Activated T-helper 2 cell treated with anti-CD3 and anti-CD28 coated beads, Interferon-gamma antibody, Interleukin-2, Interleukin-4, amounts not matched to agents 10 μg/mL and 5 μg/mL and 100 μg/mL, durations not matched to agents 14 hours and 24 hours and 36 hours (primary cell): ENCODE measurements at regions of chr11 and their contacts with region 1.

Region 1: DNA sequence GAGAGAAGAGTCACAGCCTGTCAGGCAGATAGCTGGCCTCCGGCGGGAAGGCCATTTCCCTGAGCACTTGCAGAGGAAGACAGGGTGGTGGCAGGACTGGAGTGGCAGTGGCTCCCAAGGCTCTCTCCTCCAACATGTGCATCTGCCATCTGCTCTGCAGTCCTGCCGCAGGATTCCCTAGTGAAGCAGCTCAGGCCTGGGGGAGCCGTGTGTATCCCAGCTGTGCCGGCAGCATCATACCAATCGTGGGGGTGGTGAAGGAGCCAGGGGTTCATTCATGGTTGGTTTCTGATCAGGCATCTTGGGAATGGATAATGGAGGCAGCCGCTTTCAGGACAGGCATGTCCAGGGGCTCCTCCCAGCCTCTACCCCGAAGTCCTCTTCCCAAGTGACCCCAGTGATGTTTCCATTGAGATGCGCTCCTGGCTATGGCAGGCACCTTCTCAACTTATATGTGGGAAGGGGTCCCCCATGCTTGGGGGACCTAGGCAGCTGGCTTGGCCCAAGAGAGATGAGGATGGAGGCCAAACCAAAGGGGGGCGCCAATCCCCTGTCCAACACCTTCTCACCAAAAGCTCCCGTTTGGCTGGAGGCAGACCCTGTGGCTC is 6.1 kb downstream of the TAGLN start:
- DNase-seq: no peak
- H3K4me3 Mint-ChIP-seq: no peak overlapping the region
- H3K27ac Mint-ChIP-seq: no peak overlapping the region
- H3K4me1 Mint-ChIP-seq: no peaks in the 10 kb centered on the region
- H3K27me3 Mint-ChIP-seq: no peaks in the 10 kb centered on the region

Region 2: DNA sequence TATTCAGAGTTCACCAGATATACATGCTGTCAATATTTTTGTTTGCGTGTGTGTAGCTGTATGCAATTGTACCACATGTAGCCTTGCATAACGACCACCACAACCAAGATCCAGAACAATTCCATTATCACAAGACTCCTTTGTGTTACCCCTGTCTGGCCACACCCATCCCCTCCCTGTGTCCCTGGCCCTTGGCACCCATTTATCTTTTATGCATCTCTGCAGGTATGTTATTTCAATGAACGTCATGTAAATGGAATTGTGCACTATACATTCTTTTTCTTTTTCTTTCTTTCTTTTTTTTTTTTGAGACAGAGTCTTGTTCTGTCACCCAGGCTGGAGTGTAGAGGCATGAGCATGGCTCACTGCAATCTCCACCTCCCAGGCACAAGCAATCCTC is 70.9 kb before region 1 on chr11:
- intact Hi-C with region 1: loop called (anchors 5 kb)
- DNase-seq: no peak
- H3K4me3 Mint-ChIP-seq: no peak overlapping the region
- H3K27ac Mint-ChIP-seq: no peak overlapping the region
- H3K4me1 Mint-ChIP-seq: peaks cover 2% of the 10 kb centered on the region
- H3K27me3 Mint-ChIP-seq: peaks cover 6% of the 10 kb centered on the region

Region 3: GRCh38 chr11:117220999-117221774 is 15.9 kb after region 1 on chr11:
- intact Hi-C with region 1: no loop called
- DNase-seq: no peak
- H3K4me3 Mint-ChIP-seq: no peak overlapping the region
- H3K27ac Mint-ChIP-seq: no peak overlapping the region
- H3K4me1 Mint-ChIP-seq: no peaks in the 10 kb centered on the region
- H3K27me3 Mint-ChIP-seq: no peaks in the 10 kb centered on the region